Endothelial cell of umbilical vein (primary cell): ENCODE measurements at regions of chr9 and their contacts with region 1.

Region 1: GRCh38 chr9:16368237-16369087 is 502.0 kb downstream of the BNC2 start:
- DNase-seq: peak; percentile 28
- H3K4me3 ChIP-seq: no peak overlapping the region
- H3K27ac ChIP-seq: no peak overlapping the region
- H3K4me1 ChIP-seq: peaks cover 27% of the 10 kb centered on the region
- H3K27me3 ChIP-seq: no peaks in the 10 kb centered on the region
- CTCF ChIP-seq: no peak
- POLR2A ChIP-seq: no peak

Region 2: DNA sequence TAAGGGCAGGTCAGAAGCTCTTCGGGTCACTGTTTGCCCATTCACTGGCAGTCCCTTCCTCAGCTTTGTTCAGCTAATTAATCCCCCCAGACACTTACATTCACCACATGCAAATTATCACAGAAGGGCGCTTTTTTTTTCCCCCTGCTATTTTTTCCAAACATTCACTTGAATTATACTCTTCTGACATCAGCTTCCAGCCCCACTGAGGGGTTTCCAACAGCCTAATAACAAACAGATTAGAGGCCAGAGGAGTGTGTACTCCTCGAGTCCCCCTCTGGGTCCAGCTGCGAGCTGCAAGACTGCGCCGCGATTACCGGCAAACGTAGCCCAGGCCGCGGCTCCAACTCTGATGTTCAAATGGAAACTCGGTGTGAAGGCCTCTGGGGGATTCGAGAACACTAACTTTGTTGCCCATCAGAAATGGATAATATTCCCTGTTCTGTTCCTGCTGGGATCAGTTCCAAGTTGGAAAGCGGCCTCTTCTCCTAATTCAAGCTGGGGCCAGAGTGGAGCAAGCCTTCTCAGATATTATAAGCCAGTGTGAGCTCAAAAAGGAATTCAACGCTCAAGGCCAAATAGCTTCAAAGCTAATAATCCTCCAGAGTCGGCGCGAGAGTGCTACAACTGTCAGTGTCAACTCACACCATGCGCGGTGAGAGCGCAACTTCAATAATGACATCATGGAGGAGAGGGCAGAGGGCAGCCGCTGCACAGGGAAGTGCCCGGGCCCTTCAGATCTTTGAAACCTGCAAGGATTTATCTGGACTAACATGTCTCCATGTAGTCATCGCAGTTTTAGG is 58.8 kb before region 1 on chr9:
- CTCF ChIA-PET with region 1: no interaction called
- POLR2A ChIA-PET with region 1: no interaction called
- dilution Hi-C with region 1: no loop called
- intact Hi-C with region 1: no loop called
- DNase-seq: no peak
- H3K4me3 ChIP-seq: no peak overlapping the region
- H3K27ac ChIP-seq: no peak overlapping the region
- H3K4me1 ChIP-seq: no peaks in the 10 kb centered on the region
- H3K27me3 ChIP-seq: peaks cover 6 to 20% of the 10 kb centered on the region in 2 experiments
- CTCF ChIP-seq: no peak
- POLR2A ChIP-seq: no peak

Region 3: GRCh38 chr9:16335788-16336580 is 32.5 kb before region 1 on chr9:
- CTCF ChIA-PET with region 1: interaction called, 3 read pairs
- POLR2A ChIA-PET with region 1: no interaction called
- dilution Hi-C with region 1: no loop called
- intact Hi-C with region 1: loop called (anchors 1 kb)
- DNase-seq: peak; percentile 82
- H3K4me3 ChIP-seq: no peak overlapping the region
- H3K27ac ChIP-seq: peak overlapping the region; percentile 81
- H3K4me1 ChIP-seq: peaks cover 25% of the 10 kb centered on the region
- H3K27me3 ChIP-seq: no peaks in the 10 kb centered on the region
- CTCF ChIP-seq: no peak
- POLR2A ChIP-seq: no peak

Region 4: DNA sequence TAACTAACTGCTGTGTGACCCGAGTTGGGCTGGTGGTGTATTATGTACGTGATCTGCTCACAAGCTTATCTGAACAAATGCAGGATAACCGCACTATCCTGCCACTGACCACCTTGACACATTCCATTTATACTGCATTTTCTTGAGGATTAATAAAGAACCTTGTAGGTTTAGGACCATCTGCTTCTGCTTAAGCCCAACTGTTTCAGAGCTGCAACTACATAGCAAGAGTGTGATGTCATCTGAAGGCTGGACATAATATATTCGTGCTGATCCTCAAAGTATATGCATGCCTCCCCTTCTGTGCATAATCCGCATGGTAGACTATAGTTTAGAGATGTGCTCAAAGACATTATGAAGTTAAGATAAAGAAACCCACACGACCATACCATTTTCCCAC is 66.1 kb after region 1 on chr9:
- CTCF ChIA-PET with region 1: no interaction called
- POLR2A ChIA-PET with region 1: no interaction called
- dilution Hi-C with region 1: no loop called
- intact Hi-C with region 1: no loop called
- DNase-seq: no peak
- H3K4me3 ChIP-seq: no peak overlapping the region
- H3K27ac ChIP-seq: no peak overlapping the region
- H3K4me1 ChIP-seq: no peaks in the 10 kb centered on the region
- H3K27me3 ChIP-seq: no peaks in the 10 kb centered on the region
- CTCF ChIP-seq: no peak
- POLR2A ChIP-seq: no peak

Region 5: DNA sequence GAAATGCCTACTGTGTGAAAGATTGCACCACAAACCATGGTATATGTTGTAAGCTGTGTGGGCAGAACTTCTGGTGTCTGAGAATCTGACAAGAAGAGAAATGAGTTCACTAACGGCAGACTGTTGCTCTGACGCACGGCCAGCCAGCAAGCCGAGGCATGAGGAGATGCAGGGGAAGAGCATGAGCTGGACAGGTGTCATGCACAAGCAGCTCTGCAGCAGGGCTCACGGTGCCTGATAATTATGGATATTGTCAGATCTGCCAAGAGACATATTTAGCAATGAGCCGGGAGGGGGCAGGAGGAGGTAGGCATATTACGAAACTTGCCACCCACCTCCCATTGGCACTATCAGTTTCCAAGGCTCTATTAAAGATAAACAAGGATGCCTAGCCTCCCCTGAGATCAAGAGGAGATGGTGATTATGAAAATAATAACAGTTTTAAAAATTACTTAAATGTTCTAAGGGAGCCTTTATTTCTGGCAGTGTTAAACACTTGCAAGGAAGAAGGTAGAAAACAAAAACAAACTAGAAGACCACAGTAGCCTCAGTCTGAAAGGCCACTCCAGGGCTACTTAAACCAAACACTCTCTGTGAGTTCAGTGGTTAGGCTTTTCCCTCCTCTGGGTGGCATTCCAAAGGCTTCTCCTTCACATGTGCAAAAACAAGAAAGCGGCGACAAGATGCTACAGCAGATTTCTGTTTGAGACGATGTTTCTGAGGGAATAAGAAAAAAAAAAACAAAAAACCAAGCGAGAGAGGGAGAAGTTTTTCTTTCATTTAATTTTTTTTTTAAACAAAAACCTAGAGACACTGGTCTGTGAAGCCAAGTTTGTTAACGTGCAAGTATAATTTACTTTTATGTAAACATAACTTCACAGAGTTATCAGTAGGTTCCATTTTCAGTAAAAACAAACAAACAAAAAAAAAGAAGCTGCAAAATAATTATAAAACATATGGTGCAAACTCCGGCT is 162.5 kb after region 1 on chr9:
- CTCF ChIA-PET with region 1: no interaction called
- POLR2A ChIA-PET with region 1: no interaction called
- dilution Hi-C with region 1: no loop called
- intact Hi-C with region 1: no loop called
- DNase-seq: no peak
- H3K4me3 ChIP-seq: no peak overlapping the region
- H3K27ac ChIP-seq: no peak overlapping the region
- H3K4me1 ChIP-seq: peaks cover 34% of the 10 kb centered on the region
- H3K27me3 ChIP-seq: no peaks in the 10 kb centered on the region
- CTCF ChIP-seq: no peak
- POLR2A ChIP-seq: no peak

Region 6: GRCh38 chr9:16744394-16744793 is 375.9 kb after region 1 on chr9:
- CTCF ChIA-PET with region 1: no interaction called
- POLR2A ChIA-PET with region 1: no interaction called
- dilution Hi-C with region 1: no loop called
- intact Hi-C with region 1: no loop called
- DNase-seq: no peak
- H3K4me3 ChIP-seq: no peak overlapping the region
- H3K27ac ChIP-seq: no peak overlapping the region
- H3K4me1 ChIP-seq: no peaks in the 10 kb centered on the region
- H3K27me3 ChIP-seq: no peaks in the 10 kb centered on the region
- CTCF ChIP-seq: no peak
- POLR2A ChIP-seq: no peak